IMR-90 (cell line): ENCODE measurements at regions of chr12 and their contacts with region 1.

Region 1: GRCh38 chr12:110424237-110424636 is 20.7 kb upstream of the ANAPC7 start:
- DNase-seq: no peak
- ATAC-seq: peak; percentile 56
- H3K4me3 ChIP-seq: no peak overlapping the region
- H3K27ac ChIP-seq: no peak overlapping the region
- H3K4me1 ChIP-seq: 0 out of 2 replicates have a peak, but pooled peaks cover 2% of the 10 kb centered on the region
- H3K27me3 ChIP-seq: no peaks in the 10 kb centered on the region
- CTCF ChIP-seq: no peak
- POLR2A ChIP-seq: no peak
- RAD21 ChIP-seq: no peak

Region 2: GRCh38 chr12:110093631-110094311 is 330.5 kb before region 1 on chr12:
- CTCF ChIA-PET with region 1: no interaction called
- POLR2A ChIA-PET with region 1: no interaction called
- dilution Hi-C with region 1: no loop called
- in situ Hi-C with region 1: loop called (anchors 5 kb)
- intact Hi-C with region 1: no loop called
- DNase-seq: no peak
- ATAC-seq: no peak
- H3K4me3 ChIP-seq: no peak overlapping the region
- H3K27ac ChIP-seq: no peak overlapping the region
- H3K4me1 ChIP-seq: no peaks in the 10 kb centered on the region
- H3K27me3 ChIP-seq: peaks cover 28% of the 10 kb centered on the region
- CTCF ChIP-seq: no peak
- POLR2A ChIP-seq: no peak
- RAD21 ChIP-seq: no peak